Heart left ventricle (tissue), 16 donors: ENCODE measurements at regions of chr10 and their contacts with region 1.

Region 1: GRCh38 chr10:22316285-22317120 is at the start of gene COMMD3:
- DNase-seq: peak; percentile 90 to 94 (median 91)
- ATAC-seq: peak; percentile 89 to 93 (median 91)
- H3K4me3 ChIP-seq: peak within 1 kb of the TSS; percentile 66 to 85 (median 79)
- H3K27ac ChIP-seq: peak within 1 kb of the TSS; percentile 71 to 98 (median 95)
- H3K4me1 ChIP-seq: peaks cover 0 to 42% (median 28%) of the 10 kb centered on the region in 12 donors
- H3K27me3 ChIP-seq: no peaks in the 10 kb centered on the region
- CTCF ChIP-seq: no peak
- POLR2A ChIP-seq: peak in 1 of 2 donors; percentile 81
- total RNA-seq, gene COMMD3: 44.4 to 88.3 (median 74.1) TPM

Region 2: GRCh38 chr10:21285742-21286331 is 1030.7 kb before region 1 on chr10:
- intact Hi-C with region 1: no loop called
- DNase-seq: no peak
- ATAC-seq: no peak
- H3K4me3 ChIP-seq: no peak overlapping the region
- H3K27ac ChIP-seq: no peak overlapping the region
- H3K4me1 ChIP-seq: no peaks in the 10 kb centered on the region
- H3K27me3 ChIP-seq: no peaks in the 10 kb centered on the region
- CTCF ChIP-seq: no peak
- POLR2A ChIP-seq: no peak

Region 3: GRCh38 chr10:21533467-21534279 is 782.8 kb before region 1 on chr10 and contains the start of gene MLLT10:
- intact Hi-C with region 1: loop called in 3 of 10 experiments (anchors 5 to 10 kb)
- DNase-seq: peak; percentile 96 to 98 (median 97)
- ATAC-seq: peak; percentile 86 to 97 (median 94)
- H3K4me3 ChIP-seq: peak within 1 kb of the TSS; percentile 54 to 88 (median 78)
- H3K27ac ChIP-seq: peak within 1 kb of the TSS; percentile 89 to 99 (median 97)
- H3K4me1 ChIP-seq: peaks cover 0 to 31% (median 22%) of the 10 kb centered on the region in 12 donors
- H3K27me3 ChIP-seq: no peaks in the 10 kb centered on the region
- CTCF ChIP-seq: peak in 7 of 12 donors; percentile 17 to 44 (median 21)
- POLR2A ChIP-seq: peak in 1 of 2 donors; percentile 76
- total RNA-seq, gene MLLT10: 17.1 to 30.7 (median 25.2) TPM

Region 4: GRCh38 chr10:22251751-22252223 is 64.7 kb before region 1 on chr10:
- intact Hi-C with region 1: loop called (anchors 2 to 5 kb)
- DNase-seq: peak; percentile 65 to 81 (median 76)
- ATAC-seq: peak; percentile 62 to 78 (median 68)
- H3K4me3 ChIP-seq: peak overlapping the region; percentile 65 to 85 (median 76)
- H3K27ac ChIP-seq: peak overlapping the region; percentile 96 to 98 (median 97)
- H3K4me1 ChIP-seq: peaks cover 0 to 18% (median 2%) of the 10 kb centered on the region in 12 donors
- H3K27me3 ChIP-seq: no peaks in the 10 kb centered on the region
- CTCF ChIP-seq: peak in 2 of 12 donors; percentile 6 to 15
- POLR2A ChIP-seq: no peak

Region 5: GRCh38 chr10:22340362-22341189 is 24.1 kb after region 1 on chr10:
- intact Hi-C with region 1: loop called in 1 of 10 experiments (anchors 2 kb)
- DNase-seq: peak; percentile 69 to 84 (median 72)
- ATAC-seq: peak; percentile 68 to 87 (median 86)
- H3K4me3 ChIP-seq: peak overlapping the region; percentile 62 to 94 (median 81)
- H3K27ac ChIP-seq: peak overlapping the region; percentile 81 to 97 (median 92)
- H3K4me1 ChIP-seq: peaks cover 8 to 37% (median 18%) of the 10 kb centered on the region in 12 donors
- H3K27me3 ChIP-seq: peaks cover 66 to 91% (median 84%) of the 10 kb centered on the region in 9 donors
- CTCF ChIP-seq: no peak
- POLR2A ChIP-seq: peak in 1 of 2 donors; percentile 57